ENCODE measurements at regions of chr12 and their contacts with region 1.

Region 1: DNA sequence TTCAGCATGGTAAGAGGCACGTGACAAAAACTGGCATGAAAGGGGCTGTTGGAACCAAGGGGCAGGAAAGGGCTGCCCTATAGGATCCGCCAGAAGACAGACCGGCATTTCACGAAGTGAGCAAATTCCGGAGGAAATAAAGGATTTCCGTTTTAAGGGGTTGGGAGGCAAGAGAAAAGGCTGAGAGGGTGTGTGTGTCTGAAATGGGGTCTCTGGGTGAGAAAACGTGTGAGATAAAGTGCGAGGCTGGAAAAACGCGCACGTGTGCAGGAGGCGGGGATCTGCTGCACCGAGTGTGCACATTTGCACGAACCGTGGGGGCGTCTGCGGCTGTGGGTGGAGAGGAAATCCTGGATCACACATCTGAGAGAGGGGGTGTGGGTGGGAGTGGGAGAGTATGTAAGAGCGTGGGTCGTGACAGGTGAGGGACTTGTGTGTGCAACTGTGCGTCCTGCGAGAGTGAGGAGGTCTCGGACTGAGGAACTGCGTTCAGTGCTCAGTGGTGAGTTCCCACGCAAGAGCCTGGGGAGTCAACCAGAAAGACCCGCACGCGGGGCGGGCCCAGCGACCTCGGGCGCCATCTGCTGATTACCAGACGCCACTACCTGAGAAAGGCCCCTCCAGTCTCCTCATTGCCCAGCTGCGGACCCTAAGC is 37.0 kb upstream of the P2RX7 start:
- DNase-seq: peak; percentile 83
- H3K4me3 ChIP-seq: peak overlapping the region in 2 of 3 experiments; percentile 6 to 11
- H3K27ac ChIP-seq: peak overlapping the region; percentile 82
- H3K4me1 ChIP-seq: peaks cover 13% of the 10 kb centered on the region
- H3K27me3 ChIP-seq: no peaks in the 10 kb centered on the region
- CTCF ChIP-seq: peak; percentile 76 to 97
- POLR2A ChIP-seq: no peak

Region 2: DNA sequence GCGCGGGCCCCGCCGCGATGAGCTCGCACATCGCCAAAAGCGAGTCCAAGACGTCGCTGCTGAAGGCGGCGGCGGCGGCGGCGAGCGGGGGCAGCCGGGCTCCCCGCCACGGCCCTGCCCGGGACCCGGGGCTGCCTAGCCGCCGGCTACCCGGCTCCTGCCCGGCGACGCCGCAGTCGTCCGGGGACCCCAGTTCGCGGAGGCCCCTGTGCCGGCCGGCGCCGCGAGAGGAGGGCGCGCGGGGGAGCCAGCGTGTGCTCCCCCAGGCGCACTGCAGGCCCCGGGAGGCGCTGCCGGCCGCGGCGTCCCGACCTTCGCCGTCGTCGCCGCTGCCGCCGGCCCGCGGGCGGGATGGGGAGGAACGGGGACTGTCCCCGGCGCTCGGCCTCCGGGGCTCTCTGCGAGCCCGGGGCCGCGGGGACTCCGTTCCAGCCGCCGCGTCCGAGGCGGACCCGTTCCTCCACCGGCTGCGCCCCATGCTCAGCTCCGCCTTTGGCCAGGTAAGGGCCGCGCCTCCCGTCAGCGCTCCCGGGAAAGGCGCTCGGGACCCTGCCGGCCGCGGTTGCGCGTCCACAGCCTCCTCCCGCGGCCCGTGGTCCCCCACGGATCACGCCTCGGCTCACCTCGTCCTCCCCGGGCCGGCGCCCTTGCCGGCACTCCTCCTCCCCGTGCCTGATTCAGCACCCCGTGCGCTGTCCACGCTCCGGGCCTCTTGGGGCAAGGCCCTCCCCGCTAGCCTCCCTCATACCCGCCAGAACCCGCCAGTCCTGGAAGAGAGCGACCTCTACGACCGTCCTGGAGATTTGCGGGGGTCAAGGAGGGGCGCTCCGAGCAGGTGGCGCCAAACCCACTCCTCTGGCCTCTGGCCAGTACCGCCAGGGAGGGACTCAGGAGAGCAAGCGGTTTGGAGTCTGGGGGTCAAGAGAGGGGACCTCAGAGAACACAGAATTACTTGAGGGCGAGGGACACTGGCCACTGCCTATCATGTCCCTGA is 454.5 kb before region 1 on chr12:
- CTCF ChIA-PET with region 1: no interaction called
- POLR2A ChIA-PET with region 1: no interaction called
- dilution Hi-C with region 1: no loop called
- intact Hi-C with region 1: loop called (anchors 10 kb)
- DNase-seq: peak; percentile 46
- H3K4me3 ChIP-seq: peak overlapping the region in 1 of 3 experiments; percentile 18
- H3K27ac ChIP-seq: no peak overlapping the region
- H3K4me1 ChIP-seq: peaks cover 3% of the 10 kb centered on the region
- H3K27me3 ChIP-seq: peaks cover 46 to 51% of the 10 kb centered on the region in 2 experiments
- CTCF ChIP-seq: no peak
- POLR2A ChIP-seq: no peak

Region 3: GRCh38 chr12:121005346-121005815 is 90.3 kb before region 1 on chr12:
- CTCF ChIA-PET with region 1: interaction called, 4 read pairs
- POLR2A ChIA-PET with region 1: no interaction called
- dilution Hi-C with region 1: no loop called
- intact Hi-C with region 1: loop called (anchors 1 kb)
- DNase-seq: peak; percentile 61
- H3K4me3 ChIP-seq: no peak overlapping the region
- H3K27ac ChIP-seq: no peak overlapping the region
- H3K4me1 ChIP-seq: no peaks in the 10 kb centered on the region
- H3K27me3 ChIP-seq: no peaks in the 10 kb centered on the region
- CTCF ChIP-seq: peak; percentile 78 to 89
- POLR2A ChIP-seq: no peak

Region 4: DNA sequence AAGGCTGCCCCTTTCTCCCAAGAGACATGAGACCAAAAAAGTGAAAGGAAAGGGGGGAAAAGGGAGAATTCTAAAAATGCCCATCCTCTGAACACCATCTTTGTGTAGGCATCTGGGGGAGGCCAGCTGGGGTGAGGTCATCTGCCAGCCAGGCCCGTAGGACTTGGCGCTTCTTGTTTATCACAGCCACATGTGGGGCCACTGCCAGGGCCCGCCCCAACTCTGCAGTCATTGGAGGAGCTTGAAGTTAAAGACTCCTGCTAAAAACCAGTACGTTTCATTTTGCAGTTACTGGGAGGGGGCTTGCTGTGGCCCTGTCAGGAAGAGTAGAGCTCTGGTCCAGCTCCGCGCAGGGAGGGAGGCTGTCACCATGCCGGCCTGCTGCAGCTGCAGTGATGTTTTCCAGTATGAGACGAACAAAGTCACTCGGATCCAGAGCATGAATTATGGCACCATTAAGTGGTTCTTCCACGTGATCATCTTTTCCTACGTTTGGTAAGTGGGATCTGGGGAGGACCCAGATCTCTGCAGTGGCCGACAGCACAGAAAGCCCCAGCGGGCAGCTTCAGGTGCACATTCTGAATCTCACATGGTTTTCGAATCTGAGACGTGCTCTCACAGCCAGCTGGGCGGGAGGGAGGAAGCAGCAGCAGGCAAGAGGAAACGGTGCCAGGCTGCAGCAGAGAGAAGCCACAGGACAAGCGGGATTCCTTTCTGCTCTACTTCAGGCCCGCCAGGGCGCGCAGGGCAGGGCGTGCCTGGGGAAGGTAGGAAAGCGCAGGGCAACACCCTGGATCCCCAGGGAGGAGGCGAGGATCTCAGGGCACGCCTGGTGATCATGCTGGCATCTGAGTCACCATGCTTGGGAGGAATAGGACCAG is 37.2 kb after region 1 on chr12 and contains the start of gene P2RX7:
- CTCF ChIA-PET with region 1: no interaction called
- POLR2A ChIA-PET with region 1: no interaction called
- dilution Hi-C with region 1: no loop called
- intact Hi-C with region 1: no loop called
- DNase-seq: peak; percentile 77
- H3K4me3 ChIP-seq: peak within 1 kb of the TSS; percentile 17 to 40 (median 26)
- H3K27ac ChIP-seq: peak within 1 kb of the TSS; percentile 22
- H3K4me1 ChIP-seq: peaks cover 23% of the 10 kb centered on the region
- H3K27me3 ChIP-seq: no peaks in the 10 kb centered on the region
- CTCF ChIP-seq: no peak
- POLR2A ChIP-seq: no peak
- total RNA-seq, gene P2RX7: 5.1 and 8.1 TPM in 2 replicates

Region 5: GRCh38 chr12:121170611-121171260 is 75.1 kb after region 1 on chr12:
- CTCF ChIA-PET with region 1: no interaction called
- POLR2A ChIA-PET with region 1: no interaction called
- dilution Hi-C with region 1: no loop called
- intact Hi-C with region 1: loop called (anchors 1 kb)
- DNase-seq: peak; percentile 28
- H3K4me3 ChIP-seq: no peak overlapping the region
- H3K27ac ChIP-seq: peak overlapping the region; percentile 64
- H3K4me1 ChIP-seq: peaks cover 11% of the 10 kb centered on the region
- H3K27me3 ChIP-seq: no peaks in the 10 kb centered on the region
- CTCF ChIP-seq: no peak
- POLR2A ChIP-seq: no peak

Region 6: GRCh38 chr12:121260091-121260490 is 164.4 kb after region 1 on chr12:
- CTCF ChIA-PET with region 1: no interaction called
- POLR2A ChIA-PET with region 1: no interaction called
- dilution Hi-C with region 1: no loop called
- intact Hi-C with region 1: no loop called
- DNase-seq: no peak
- H3K4me3 ChIP-seq: no peak overlapping the region
- H3K27ac ChIP-seq: no peak overlapping the region
- H3K4me1 ChIP-seq: no peaks in the 10 kb centered on the region
- H3K27me3 ChIP-seq: no peaks in the 10 kb centered on the region
- CTCF ChIP-seq: no peak
- POLR2A ChIP-seq: no peak